Prostate gland (tissue), 2 donors: ENCODE measurements at regions of chr14 and their contacts with region 1.

Region 1: DNA sequence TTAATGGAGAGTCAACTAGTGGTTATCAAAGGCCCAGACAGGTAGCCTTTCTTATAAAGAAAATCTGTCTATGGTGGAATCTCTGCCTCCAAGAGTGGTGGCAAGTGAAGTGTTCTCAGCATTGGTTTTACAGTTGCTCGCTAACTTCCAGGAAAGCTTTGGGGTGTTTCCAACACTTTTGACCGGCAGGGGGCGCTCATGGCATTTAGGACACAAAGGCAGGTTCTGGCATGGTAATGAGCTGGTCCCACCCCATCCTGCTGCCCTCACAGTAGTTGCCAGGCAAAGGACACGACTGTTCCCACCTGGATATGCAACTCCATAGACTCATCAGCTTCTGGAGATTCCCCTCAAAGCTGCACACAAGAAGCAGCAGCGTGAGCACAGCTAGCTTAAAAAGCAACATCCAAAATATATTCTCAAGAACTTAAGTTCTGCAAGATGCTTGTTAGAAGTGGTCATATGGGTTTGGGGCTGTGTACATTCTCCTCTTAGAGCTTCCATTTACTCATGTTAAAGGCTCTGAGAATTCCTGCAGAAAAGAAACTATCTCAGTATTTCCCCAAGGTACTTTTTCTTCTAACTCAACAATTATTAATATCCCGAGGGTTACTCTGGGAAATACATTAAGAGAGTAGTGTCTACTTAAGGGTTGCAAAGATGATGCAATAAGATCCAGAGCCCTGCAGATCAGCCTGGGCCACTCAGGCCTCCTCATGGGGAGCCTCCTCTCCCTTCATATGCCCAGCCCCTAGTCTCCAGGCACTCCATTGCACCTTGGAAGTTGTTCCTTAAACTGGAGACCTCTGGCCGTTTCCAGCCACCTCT is 14.8 kb downstream of the PROX2 start:
- DNase-seq: peak; percentile 86
- H3K4me3 ChIP-seq: no peak overlapping the region
- H3K27ac ChIP-seq: no peak overlapping the region
- H3K4me1 ChIP-seq: no peaks in the 10 kb centered on the region
- H3K27me3 ChIP-seq: no peaks in the 10 kb centered on the region
- CTCF ChIP-seq: peak; percentile 66 to 89 (median 79)
- POLR2A ChIP-seq: no peak

Region 2: GRCh38 chr14:74671789-74672188 is 189.3 kb before region 1 on chr14:
- intact Hi-C with region 1: no loop called
- DNase-seq: peak; percentile 18
- H3K4me3 ChIP-seq: no peak overlapping the region
- H3K27ac ChIP-seq: no peak overlapping the region
- H3K4me1 ChIP-seq: no peaks in the 10 kb centered on the region
- H3K27me3 ChIP-seq: no peaks in the 10 kb centered on the region
- CTCF ChIP-seq: no peak
- POLR2A ChIP-seq: no peak

Region 3: DNA sequence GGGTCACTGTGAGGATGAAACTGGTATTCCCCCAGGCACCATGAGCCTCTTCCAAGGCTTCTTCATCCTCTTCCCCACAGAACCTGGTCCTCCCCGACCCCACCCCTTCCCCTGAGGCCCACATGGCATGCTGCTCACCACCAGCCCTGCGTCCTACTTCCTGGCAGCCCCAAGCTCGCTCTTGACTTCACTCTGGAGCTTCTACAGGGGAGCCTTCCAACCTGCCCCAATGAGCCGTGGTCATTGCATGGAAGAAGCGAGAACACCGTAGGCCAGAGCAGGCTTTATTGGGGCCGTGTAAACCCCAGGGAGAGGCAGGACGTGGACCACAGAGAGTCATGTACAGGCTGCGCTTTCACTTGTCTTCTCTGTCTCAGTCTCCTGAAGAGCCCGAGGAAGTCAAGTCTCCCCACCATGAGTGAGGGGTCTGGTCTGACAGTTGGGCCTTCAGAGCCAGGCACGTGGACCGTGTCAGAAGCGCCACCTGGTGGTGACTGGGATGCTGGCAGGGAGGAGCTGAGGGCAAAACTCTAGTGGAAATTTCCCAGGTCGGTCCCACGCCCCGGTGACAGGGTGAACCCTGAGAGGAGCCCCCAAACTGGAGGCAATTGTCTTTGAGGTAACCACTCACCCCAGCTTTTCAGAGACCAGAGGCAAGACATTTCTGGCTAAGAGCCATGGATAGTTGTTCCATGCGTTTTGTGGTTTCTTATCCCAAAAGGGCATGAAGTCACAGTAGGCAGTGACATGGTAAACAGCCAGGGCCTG is 44.4 kb after region 1 on chr14:
- intact Hi-C with region 1: loop called (anchors 2 kb)
- DNase-seq: peak; percentile 55
- H3K4me3 ChIP-seq: no peak overlapping the region
- H3K27ac ChIP-seq: no peak overlapping the region
- H3K4me1 ChIP-seq: no peaks in the 10 kb centered on the region
- H3K27me3 ChIP-seq: no peaks in the 10 kb centered on the region
- CTCF ChIP-seq: peak; percentile 86 to 90 (median 88)
- POLR2A ChIP-seq: no peak

Region 4: DNA sequence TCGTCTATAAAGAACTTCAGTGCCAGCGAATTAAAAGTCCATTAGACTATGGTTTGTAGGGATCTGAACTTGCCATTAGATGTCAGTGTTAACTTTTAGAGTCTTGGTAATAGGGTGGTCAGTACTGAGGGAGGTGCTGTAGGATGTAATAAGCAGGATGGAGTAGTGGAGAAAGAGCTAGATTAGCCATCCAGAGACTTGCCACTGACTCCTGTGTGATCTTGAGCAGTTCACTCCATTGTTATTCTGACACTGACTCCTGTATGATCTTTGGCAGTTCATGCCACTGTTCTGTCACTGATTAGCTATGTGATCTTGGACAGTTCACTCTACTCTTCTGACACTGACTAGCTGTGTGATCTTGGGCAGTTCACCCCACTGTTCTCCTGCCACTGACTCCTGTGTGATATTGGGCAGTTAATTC is 933.5 kb after region 1 on chr14:
- intact Hi-C with region 1: no loop called
- DNase-seq: no peak
- H3K4me3 ChIP-seq: no peak overlapping the region
- H3K27ac ChIP-seq: no peak overlapping the region
- H3K4me1 ChIP-seq: no peaks in the 10 kb centered on the region
- H3K27me3 ChIP-seq: no peaks in the 10 kb centered on the region
- CTCF ChIP-seq: peak in 3 of 4 experiments; percentile 50 to 61 (median 55)
- POLR2A ChIP-seq: no peak